ENCODE measurements at regions of chr13 and their contacts with region 1.

Region 1: DNA sequence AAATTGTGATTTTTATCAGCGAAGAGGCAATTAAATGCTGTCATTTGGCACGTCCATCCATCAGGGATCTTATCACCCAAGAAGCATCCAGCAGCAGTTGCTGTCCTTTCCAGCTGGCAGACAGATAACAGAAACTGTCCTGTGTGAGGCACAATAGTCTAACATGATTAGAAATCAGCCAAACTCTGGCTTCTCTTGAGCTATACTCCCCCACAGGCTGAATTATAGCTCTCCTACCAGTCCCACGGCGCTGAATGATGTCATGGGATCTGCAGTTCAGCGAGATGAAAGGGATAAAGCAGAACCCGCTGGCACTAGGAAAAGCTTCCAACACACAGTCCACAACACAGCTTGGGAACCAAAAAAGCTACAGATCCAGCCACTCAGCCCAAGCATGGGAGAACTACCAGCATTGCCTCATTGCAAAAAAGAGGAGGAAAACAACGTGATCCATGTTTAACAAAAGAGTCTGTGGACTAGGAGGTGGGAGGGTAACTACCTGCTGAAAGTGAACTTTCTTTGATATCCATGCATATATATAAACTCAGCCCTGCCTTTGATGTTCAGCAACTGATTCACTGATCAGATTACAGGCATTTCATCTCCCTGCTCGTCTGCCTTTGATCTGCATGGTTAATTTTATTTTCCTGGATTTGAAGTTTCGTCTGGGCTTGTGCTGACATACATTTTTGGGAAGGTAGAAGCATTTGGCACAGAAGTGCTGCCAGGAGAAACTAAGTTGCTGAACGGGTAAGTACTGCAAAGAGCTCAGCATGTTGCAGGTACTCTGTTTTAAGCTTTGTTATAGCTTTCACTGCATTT is at the start of gene TNFRSF19:
- DNase-seq: peak; percentile 91
- ATAC-seq: peak; percentile 84
- H3K4me3 ChIP-seq: peak within 1 kb of the TSS; percentile 53
- H3K27ac ChIP-seq: peak within 1 kb of the TSS; percentile 48
- H3K4me1 ChIP-seq: peaks cover 2% of the 10 kb centered on the region; the same call in 1 of the 2 replicates
- H3K27me3 ChIP-seq: no peaks in the 10 kb centered on the region
- CTCF ChIP-seq: no peak
- POLR2A ChIP-seq: no peak
- RAD21 ChIP-seq: no peak
- total RNA-seq, gene TNFRSF19: 18.6 and 21.9 TPM in 2 replicates

Region 2: GRCh38 chr13:23399347-23399746 is 171.0 kb before region 1 on chr13:
- CTCF ChIA-PET with region 1: no interaction called
- POLR2A ChIA-PET with region 1: no interaction called
- dilution Hi-C with region 1: no loop called
- in situ Hi-C with region 1: no loop called
- intact Hi-C with region 1: no loop called
- DNase-seq: no peak
- ATAC-seq: no peak
- H3K4me3 ChIP-seq: no peak overlapping the region
- H3K27ac ChIP-seq: no peak overlapping the region
- H3K4me1 ChIP-seq: no peaks in the 10 kb centered on the region
- H3K27me3 ChIP-seq: no peaks in the 10 kb centered on the region
- CTCF ChIP-seq: no peak
- POLR2A ChIP-seq: no peak
- RAD21 ChIP-seq: no peak

Region 3: DNA sequence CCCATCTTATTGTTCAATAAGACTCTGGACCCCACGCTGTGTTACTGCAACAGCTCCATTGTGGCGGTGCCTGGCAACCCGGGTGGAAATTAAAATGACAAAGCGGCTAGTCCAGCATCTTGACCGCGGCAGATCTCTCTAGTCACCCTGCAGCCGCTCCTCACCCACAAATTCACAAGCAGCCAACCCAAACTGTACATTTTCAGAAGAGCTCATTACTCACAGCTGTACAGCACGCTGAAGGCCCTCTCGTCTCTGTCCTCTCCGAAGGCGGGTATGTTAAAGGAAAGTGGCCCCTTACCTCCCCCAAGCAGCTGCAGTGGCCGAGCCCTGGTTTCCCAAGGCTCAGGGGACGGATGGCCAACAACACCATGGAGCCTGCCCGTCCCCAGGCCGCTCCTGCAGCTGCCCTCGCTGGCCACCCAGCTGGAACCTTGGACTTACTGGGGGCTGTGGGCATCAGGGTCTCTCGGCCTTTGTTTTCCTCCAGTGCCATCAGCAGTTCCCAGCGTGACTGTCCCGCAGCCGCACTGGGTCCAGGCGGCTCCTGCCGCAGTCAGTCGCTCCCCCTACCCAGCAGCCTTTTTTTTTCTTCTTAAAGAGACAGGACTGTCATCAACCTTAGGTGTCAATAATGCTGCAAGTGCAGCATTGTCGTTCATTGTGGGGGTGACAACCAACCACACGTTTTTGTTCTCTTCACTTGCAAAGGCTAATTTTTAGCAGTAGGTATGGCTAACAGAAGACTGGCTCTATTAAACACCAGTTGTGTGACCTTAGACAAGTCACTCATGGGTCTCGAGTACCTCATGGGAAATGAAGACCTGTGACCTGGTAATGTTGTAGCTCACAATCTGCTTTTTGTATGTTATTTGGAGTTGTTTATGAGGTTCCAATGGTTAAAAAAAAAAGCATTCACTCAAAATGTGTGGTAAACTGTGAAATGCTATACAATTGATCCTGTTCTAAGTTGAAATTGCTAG is 136.8 kb before region 1 on chr13 and contains the start of gene SACS:
- CTCF ChIA-PET with region 1: no interaction called
- POLR2A ChIA-PET with region 1: no interaction called
- dilution Hi-C with region 1: no loop called
- in situ Hi-C with region 1: no loop called
- intact Hi-C with region 1: no loop called
- DNase-seq: peak; percentile 52
- ATAC-seq: peak; percentile 88
- H3K4me3 ChIP-seq: peak within 1 kb of the TSS; percentile 88
- H3K27ac ChIP-seq: peak within 1 kb of the TSS; percentile 83
- H3K4me1 ChIP-seq: no peaks in the 10 kb centered on the region
- H3K27me3 ChIP-seq: no peaks in the 10 kb centered on the region
- CTCF ChIP-seq: no peak
- POLR2A ChIP-seq: 0 out of 2 replicates have a peak, but pooled peaks have one; percentile 22
- RAD21 ChIP-seq: no peak
- total RNA-seq, gene SACS: 121 and 174 TPM in 2 replicates

Region 4: DNA sequence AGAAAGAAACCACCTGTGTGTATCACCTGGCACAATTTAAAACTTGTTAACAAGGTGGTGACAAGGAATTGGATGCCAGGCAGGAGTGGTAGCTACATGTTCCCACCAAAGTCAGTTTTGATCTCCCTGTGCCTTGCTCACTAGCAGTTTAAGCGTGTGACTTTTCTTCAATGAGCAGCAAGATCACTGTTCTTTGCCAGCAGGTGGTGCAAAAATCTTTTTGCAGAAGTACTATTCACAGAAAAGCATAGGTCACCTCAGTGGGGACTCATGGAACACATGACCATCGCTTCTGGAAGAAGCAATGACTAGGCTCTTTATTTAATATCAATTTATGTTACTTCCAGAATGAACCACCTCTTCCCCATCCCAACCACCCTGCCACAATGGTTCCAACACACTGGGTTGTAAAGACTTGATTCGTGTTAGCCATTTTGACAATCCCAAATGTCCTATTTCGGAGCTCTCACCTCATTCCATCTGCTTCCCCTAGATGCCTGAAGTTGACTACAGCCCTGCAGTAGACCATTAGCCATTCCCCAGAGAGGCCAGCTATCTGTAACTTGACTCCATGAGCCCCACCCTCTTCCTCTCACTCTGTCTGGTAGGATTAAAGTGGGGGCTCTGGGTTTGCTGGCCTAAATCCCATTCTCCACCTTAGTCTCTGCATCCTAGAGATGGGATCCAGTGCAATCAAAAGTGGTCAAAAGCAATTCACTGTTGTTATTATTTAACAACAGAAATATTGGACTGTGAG is 59.2 kb before region 1 on chr13:
- CTCF ChIA-PET with region 1: no interaction called
- POLR2A ChIA-PET with region 1: no interaction called
- dilution Hi-C with region 1: no loop called
- in situ Hi-C with region 1: no loop called
- intact Hi-C with region 1: loop called (anchors 2 kb)
- DNase-seq: peak; percentile 75
- ATAC-seq: peak; percentile 27; the same call in 1 of the 2 replicates
- H3K4me3 ChIP-seq: no peak overlapping the region
- H3K27ac ChIP-seq: peak overlapping the region; percentile 10; the same call in 1 of the 2 replicates
- H3K4me1 ChIP-seq: peaks cover 14% of the 10 kb centered on the region
- H3K27me3 ChIP-seq: no peaks in the 10 kb centered on the region
- CTCF ChIP-seq: peak; percentile 31; the same call in 1 of the 2 replicates
- POLR2A ChIP-seq: no peak
- RAD21 ChIP-seq: peak; percentile 30

Region 5: GRCh38 chr13:23621316-23621645 is 51.0 kb after region 1 on chr13:
- CTCF ChIA-PET with region 1: no interaction called
- POLR2A ChIA-PET with region 1: no interaction called
- dilution Hi-C with region 1: no loop called
- in situ Hi-C with region 1: no loop called
- intact Hi-C with region 1: no loop called
- DNase-seq: peak; percentile 96
- ATAC-seq: peak; percentile 84
- H3K4me3 ChIP-seq: no peak overlapping the region
- H3K27ac ChIP-seq: peak overlapping the region; percentile 58
- H3K4me1 ChIP-seq: peaks cover 22% of the 10 kb centered on the region
- H3K27me3 ChIP-seq: no peaks in the 10 kb centered on the region
- CTCF ChIP-seq: no peak
- POLR2A ChIP-seq: no peak
- RAD21 ChIP-seq: peak; percentile 25

Measured in IMR-90 (cell line).